Caco-2 (cell line): ENCODE measurements at regions of chr12 and their contacts with region 1.

Region 1: GRCh38 chr12:116737774-116738700 is at the starts of genes RNFT2 and SPRING1:
- DNase-seq: peak; percentile 99
- H3K4me3 ChIP-seq: peak within 1 kb of the TSS; percentile 93
- H3K4me3 Mint-ChIP-seq: peak within 1 kb of the TSS; percentile 96
- H3K27ac Mint-ChIP-seq: peak within 1 kb of the TSS; percentile 78
- H3K4me1 ChIP-seq: peaks cover 26% of the 10 kb centered on the region
- H3K4me1 Mint-ChIP-seq: peaks cover 19% of the 10 kb centered on the region
- H3K27me3 ChIP-seq: no peaks in the 10 kb centered on the region
- H3K27me3 Mint-ChIP-seq: no peaks in the 10 kb centered on the region
- CTCF ChIP-seq: peak in 1 of 2 experiments; percentile 1
- total RNA-seq, gene RNFT2: 10.5 and 11.6 TPM in 2 replicates
- total RNA-seq, gene SPRING1: 68.5 and 69.6 TPM in 2 replicates

Region 2: GRCh38 chr12:116726694-116727093 is 11.3 kb before region 1 on chr12:
- CTCF ChIA-PET with region 1: no interaction called
- POLR2A ChIA-PET with region 1: interaction called, 7 read pairs
- intact Hi-C with region 1: loop called (anchors 1 kb)
- DNase-seq: no peak
- H3K4me3 ChIP-seq: no peak overlapping the region
- H3K4me3 Mint-ChIP-seq: no peak overlapping the region
- H3K27ac Mint-ChIP-seq: no peak overlapping the region
- H3K4me1 ChIP-seq: peaks cover 22% of the 10 kb centered on the region
- H3K4me1 Mint-ChIP-seq: peaks cover 23% of the 10 kb centered on the region
- H3K27me3 ChIP-seq: no peaks in the 10 kb centered on the region
- H3K27me3 Mint-ChIP-seq: no peaks in the 10 kb centered on the region
- CTCF ChIP-seq: no peak

Region 3: GRCh38 chr12:116818948-116819832 is 81.2 kb after region 1 on chr12:
- CTCF ChIA-PET with region 1: no interaction called
- POLR2A ChIA-PET with region 1: no interaction called
- intact Hi-C with region 1: loop called (anchors 1 kb)
- DNase-seq: peak; percentile 91 to 93
- H3K4me3 ChIP-seq: peak overlapping the region; percentile 92
- H3K4me3 Mint-ChIP-seq: peak overlapping the region; percentile 83
- H3K27ac Mint-ChIP-seq: peak overlapping the region; percentile 39
- H3K4me1 ChIP-seq: no peaks in the 10 kb centered on the region; the same call in 1 of the 2 replicates
- H3K4me1 Mint-ChIP-seq: peaks cover 15% of the 10 kb centered on the region
- H3K27me3 ChIP-seq: no peaks in the 10 kb centered on the region
- H3K27me3 Mint-ChIP-seq: no peaks in the 10 kb centered on the region
- CTCF ChIP-seq: no peak

Region 4: DNA sequence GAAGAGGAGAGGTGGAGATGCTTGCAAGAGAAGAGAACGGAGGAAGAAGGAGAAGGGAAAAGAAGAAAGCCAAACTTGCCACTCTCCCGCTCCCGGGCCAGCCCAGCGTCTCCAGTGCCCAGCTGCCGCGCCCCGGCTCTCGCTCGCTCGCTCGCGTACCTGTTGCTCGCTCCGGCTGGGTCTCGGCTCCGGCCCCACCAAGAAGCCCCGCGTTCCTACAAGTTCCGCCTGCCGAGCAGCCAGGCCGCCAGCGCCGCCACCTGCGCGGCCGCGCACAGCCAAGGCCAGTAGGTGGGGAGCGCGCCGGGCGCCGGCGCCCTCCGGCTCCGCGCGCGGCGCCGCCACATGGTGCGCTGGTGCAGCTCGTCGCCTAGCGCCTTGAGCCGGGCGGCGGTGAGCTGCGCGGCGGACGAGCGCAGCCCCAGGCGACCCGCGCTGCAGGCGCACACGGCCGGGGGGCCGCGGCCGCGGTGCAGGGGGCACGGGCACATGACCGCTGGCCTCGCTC is 142.8 kb after region 1 on chr12:
- CTCF ChIA-PET with region 1: no interaction called
- POLR2A ChIA-PET with region 1: no interaction called
- intact Hi-C with region 1: loop called (anchors 2 kb)
- DNase-seq: peak; percentile 54 to 76
- H3K4me3 ChIP-seq: peak overlapping the region; percentile 37
- H3K4me3 Mint-ChIP-seq: peak overlapping the region; percentile 85
- H3K27ac Mint-ChIP-seq: peak overlapping the region; percentile 34
- H3K4me1 ChIP-seq: peaks cover 12% of the 10 kb centered on the region; the same call in 1 of the 2 replicates
- H3K4me1 Mint-ChIP-seq: peaks cover 21% of the 10 kb centered on the region
- H3K27me3 ChIP-seq: peaks cover 11% of the 10 kb centered on the region
- H3K27me3 Mint-ChIP-seq: peaks cover 32% of the 10 kb centered on the region
- CTCF ChIP-seq: peak in 1 of 2 experiments; percentile 2

Region 5: GRCh38 chr12:116916714-116917114 is 178.7 kb after region 1 on chr12:
- CTCF ChIA-PET with region 1: no interaction called
- POLR2A ChIA-PET with region 1: no interaction called
- intact Hi-C with region 1: loop called (anchors 1 kb)
- DNase-seq: peak; percentile 74 to 80
- H3K4me3 ChIP-seq: no peak overlapping the region
- H3K4me3 Mint-ChIP-seq: no peak overlapping the region
- H3K27ac Mint-ChIP-seq: peak overlapping the region; percentile 83
- H3K4me1 ChIP-seq: peaks cover 52% of the 10 kb centered on the region
- H3K4me1 Mint-ChIP-seq: peaks cover 42% of the 10 kb centered on the region
- H3K27me3 ChIP-seq: no peaks in the 10 kb centered on the region
- H3K27me3 Mint-ChIP-seq: no peaks in the 10 kb centered on the region
- CTCF ChIP-seq: peak in 1 of 2 experiments; percentile 49